Activated CD8-positive, alpha-beta T cell treated with anti-CD3 and anti-CD28 coated beads for 36 hours (primary cell): ENCODE measurements at regions of chr20 and their contacts with region 1.

Region 1: DNA sequence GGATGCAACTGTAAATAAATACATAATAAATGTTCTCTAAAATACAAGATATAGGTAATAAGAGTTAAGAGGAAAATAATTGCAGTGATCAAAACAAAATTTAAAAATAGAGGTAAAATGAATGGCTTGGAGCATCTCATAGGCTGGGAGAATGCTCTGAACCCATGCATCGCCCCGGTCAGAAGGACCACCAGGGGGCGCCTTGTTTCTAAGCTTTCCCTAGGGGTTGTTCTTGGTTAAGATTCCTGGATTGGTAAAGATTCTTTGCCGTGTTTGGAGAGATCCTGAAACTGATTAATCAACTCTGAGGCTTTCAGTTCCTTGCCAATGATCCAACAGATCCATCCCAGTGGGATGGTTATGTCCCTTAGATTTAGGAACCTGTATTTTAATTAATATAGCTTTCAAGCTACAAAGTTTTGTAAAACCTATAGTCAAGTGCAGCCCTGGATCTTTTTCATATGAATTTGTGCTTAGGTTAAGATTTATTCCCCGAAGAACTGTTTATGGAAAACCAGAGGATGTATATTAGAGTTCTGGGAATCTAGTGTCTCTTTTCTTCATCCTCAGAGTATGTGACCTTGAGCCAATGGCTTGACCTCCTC is 45.3 kb upstream of the PRELID3B start:
- DNase-seq: peak; percentile 93
- ATAC-seq: peak; percentile 75
- H3K4me3 Mint-ChIP-seq: no peak overlapping the region
- H3K27ac Mint-ChIP-seq: no peak overlapping the region
- H3K4me1 Mint-ChIP-seq: peaks cover 4% of the 10 kb centered on the region
- H3K27me3 Mint-ChIP-seq: no peaks in the 10 kb centered on the region
- CTCF ChIP-seq: peak; percentile 98

Region 2: GRCh38 chr20:59074445-59074844 is 13.5 kb before region 1 on chr20:
- CTCF ChIA-PET with region 1: interaction called, 12 read pairs
- POLR2A ChIA-PET with region 1: interaction called, 3 read pairs
- intact Hi-C with region 1: no loop called
- DNase-seq: peak; percentile 57
- ATAC-seq: peak; percentile 65
- H3K4me3 Mint-ChIP-seq: no peak overlapping the region
- H3K27ac Mint-ChIP-seq: no peak overlapping the region
- H3K4me1 Mint-ChIP-seq: peaks cover 61% of the 10 kb centered on the region
- H3K27me3 Mint-ChIP-seq: peaks cover 12% of the 10 kb centered on the region
- CTCF ChIP-seq: no peak

Region 3: GRCh38 chr20:59120491-59120890 is 32.6 kb after region 1 on chr20:
- CTCF ChIA-PET with region 1: interaction called, 36 read pairs
- POLR2A ChIA-PET with region 1: no interaction called
- intact Hi-C with region 1: no loop called
- DNase-seq: peak; percentile 67
- ATAC-seq: peak; percentile 15
- H3K4me3 Mint-ChIP-seq: no peak overlapping the region
- H3K27ac Mint-ChIP-seq: peak overlapping the region; percentile 97
- H3K4me1 Mint-ChIP-seq: peaks cover 75% of the 10 kb centered on the region
- H3K27me3 Mint-ChIP-seq: no peaks in the 10 kb centered on the region
- CTCF ChIP-seq: no peak

Region 4: GRCh38 chr20:59159493-59160376 is 71.8 kb after region 1 on chr20:
- CTCF ChIA-PET with region 1: interaction called, 22 read pairs
- POLR2A ChIA-PET with region 1: interaction called, 4 read pairs
- intact Hi-C with region 1: no loop called
- DNase-seq: peak; percentile 87
- ATAC-seq: peak; percentile 89
- H3K4me3 Mint-ChIP-seq: peak overlapping the region; percentile 95
- H3K27ac Mint-ChIP-seq: peak overlapping the region; percentile 98
- H3K4me1 Mint-ChIP-seq: peaks cover 74% of the 10 kb centered on the region
- H3K27me3 Mint-ChIP-seq: no peaks in the 10 kb centered on the region
- CTCF ChIP-seq: no peak

Region 5: GRCh38 chr20:59214606-59215547 is 126.9 kb after region 1 on chr20:
- CTCF ChIA-PET with region 1: interaction called, 24 read pairs
- POLR2A ChIA-PET with region 1: no interaction called
- intact Hi-C with region 1: loop called (anchors 5 kb)
- DNase-seq: no peak
- ATAC-seq: no peak
- H3K4me3 Mint-ChIP-seq: no peak overlapping the region
- H3K27ac Mint-ChIP-seq: no peak overlapping the region
- H3K4me1 Mint-ChIP-seq: peaks cover 2% of the 10 kb centered on the region
- H3K27me3 Mint-ChIP-seq: no peaks in the 10 kb centered on the region
- CTCF ChIP-seq: no peak